Mammary epithelial cell (primary cell): ENCODE measurements at regions of chr18 and their contacts with region 1.

Region 1: GRCh38 chr18:22250591-22250996 is 81.2 kb downstream of the GATA6 start:
- DNase-seq: peak; percentile 88
- H3K4me3 ChIP-seq: no peak overlapping the region
- H3K27ac ChIP-seq: no peak overlapping the region
- H3K4me1 ChIP-seq: peaks cover 11% of the 10 kb centered on the region
- H3K27me3 ChIP-seq: peaks cover 19% of the 10 kb centered on the region
- CTCF ChIP-seq: no peak

Region 2: GRCh38 chr18:22831441-22831904 is 580.9 kb after region 1 on chr18:
- CTCF ChIA-PET with region 1: no interaction called
- dilution Hi-C with region 1: no loop called
- in situ Hi-C with region 1: no loop called
- intact Hi-C with region 1: no loop called
- DNase-seq: peak; percentile 87
- H3K4me3 ChIP-seq: no peak overlapping the region
- H3K27ac ChIP-seq: peak overlapping the region; percentile 68
- H3K4me1 ChIP-seq: peaks cover 38% of the 10 kb centered on the region
- H3K27me3 ChIP-seq: no peaks in the 10 kb centered on the region
- CTCF ChIP-seq: no peak

Region 3: GRCh38 chr18:23071285-23071684 is 820.7 kb after region 1 on chr18:
- CTCF ChIA-PET with region 1: no interaction called
- dilution Hi-C with region 1: no loop called
- in situ Hi-C with region 1: loop called in 1 of 2 experiments (anchors 25 kb)
- intact Hi-C with region 1: no loop called
- DNase-seq: peak; percentile 11
- H3K4me3 ChIP-seq: no peak overlapping the region
- H3K27ac ChIP-seq: no peak overlapping the region
- H3K4me1 ChIP-seq: no peaks in the 10 kb centered on the region
- H3K27me3 ChIP-seq: no peaks in the 10 kb centered on the region
- CTCF ChIP-seq: no peak